OCI-LY7 (cell line): ENCODE measurements at regions of chr5 and their contacts with region 1.

Region 1: DNA sequence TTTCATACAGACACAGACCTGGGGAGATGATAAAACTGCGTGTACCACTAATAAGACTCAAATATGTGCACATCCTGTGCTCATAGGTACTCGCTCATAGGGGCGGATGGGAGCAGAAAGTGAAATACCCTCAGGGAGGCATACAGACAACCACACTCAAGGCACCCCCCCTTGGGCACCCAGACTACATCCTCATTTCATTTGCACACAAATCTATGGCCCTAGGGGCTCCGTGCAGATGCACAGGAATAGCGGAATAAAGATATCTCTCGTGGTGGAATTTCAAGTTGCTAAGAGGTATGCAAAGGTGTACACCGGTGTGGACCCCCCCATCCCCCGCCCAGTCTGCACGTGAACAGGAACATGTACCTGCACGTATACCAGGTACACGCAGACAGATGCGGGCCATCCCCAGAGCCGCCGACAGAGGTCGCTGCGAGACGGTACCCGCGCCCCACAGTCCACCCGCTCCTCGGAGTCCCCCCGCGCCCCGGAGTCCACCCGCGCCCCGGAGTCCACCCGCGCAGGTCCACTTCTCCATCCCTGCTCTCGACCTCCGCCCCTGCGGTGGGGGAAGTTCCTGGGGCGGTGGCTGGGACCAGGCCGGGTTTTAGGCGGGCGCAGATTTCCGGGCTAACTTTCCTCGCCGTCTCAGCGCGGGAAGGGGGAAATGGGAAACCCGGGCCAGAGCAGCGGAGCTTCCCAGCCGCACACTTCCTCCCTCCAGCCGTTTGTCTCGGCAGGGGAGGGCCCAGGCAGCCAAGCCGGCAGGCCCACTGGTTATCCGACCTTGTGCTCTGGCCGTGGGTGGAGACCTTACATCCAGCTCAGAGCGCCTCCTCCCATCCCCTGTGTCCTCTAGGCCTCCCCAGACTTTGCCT is 1.0 kb upstream of the IL12B start:
- DNase-seq: peak; percentile 73
- H3K4me3 ChIP-seq: peak overlapping the region; percentile 72
- H3K27ac ChIP-seq: peak overlapping the region; percentile 57
- H3K4me1 ChIP-seq: peaks cover 36% of the 10 kb centered on the region
- CTCF ChIP-seq: peak; percentile 84

Region 2: DNA sequence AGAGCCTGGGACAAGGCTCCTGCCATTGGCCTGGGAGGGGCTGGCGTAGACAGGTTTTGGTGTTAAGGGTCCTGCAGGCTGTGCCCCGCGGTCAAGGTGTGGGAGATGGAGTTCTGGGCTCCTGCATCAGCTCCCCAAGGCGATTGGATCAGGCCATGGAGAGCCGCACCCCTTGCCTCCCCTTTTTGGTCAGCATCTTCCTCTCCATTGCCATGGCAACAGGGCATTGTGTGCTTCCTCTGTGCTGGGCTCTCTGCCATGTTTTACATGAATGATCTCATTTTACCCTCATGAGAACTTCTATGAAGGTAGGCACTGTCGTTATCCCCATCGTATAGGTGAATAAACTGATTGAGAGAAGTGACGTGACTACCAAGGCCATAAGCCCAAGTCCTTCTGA is 1128.1 kb before region 1 on chr5:
- CTCF ChIA-PET with region 1: no interaction called
- POLR2A ChIA-PET with region 1: no interaction called
- intact Hi-C with region 1: no loop called
- DNase-seq: no peak
- H3K4me3 ChIP-seq: no peak overlapping the region
- H3K27ac ChIP-seq: no peak overlapping the region
- H3K4me1 ChIP-seq: peaks cover 34% of the 10 kb centered on the region
- CTCF ChIP-seq: no peak

Region 3: GRCh38 chr5:159262859-159263567 is 68.3 kb before region 1 on chr5 and contains the start of gene UBLCP1:
- CTCF ChIA-PET with region 1: no interaction called
- POLR2A ChIA-PET with region 1: no interaction called
- intact Hi-C with region 1: no loop called
- DNase-seq: peak; percentile 92
- H3K4me3 ChIP-seq: peak within 1 kb of the TSS; percentile 97
- H3K27ac ChIP-seq: peak within 1 kb of the TSS; percentile 72
- H3K4me1 ChIP-seq: peaks cover 17% of the 10 kb centered on the region
- CTCF ChIP-seq: no peak
- total RNA-seq, gene UBLCP1: 7.7 and 11.3 TPM in 2 replicates

Region 4: DNA sequence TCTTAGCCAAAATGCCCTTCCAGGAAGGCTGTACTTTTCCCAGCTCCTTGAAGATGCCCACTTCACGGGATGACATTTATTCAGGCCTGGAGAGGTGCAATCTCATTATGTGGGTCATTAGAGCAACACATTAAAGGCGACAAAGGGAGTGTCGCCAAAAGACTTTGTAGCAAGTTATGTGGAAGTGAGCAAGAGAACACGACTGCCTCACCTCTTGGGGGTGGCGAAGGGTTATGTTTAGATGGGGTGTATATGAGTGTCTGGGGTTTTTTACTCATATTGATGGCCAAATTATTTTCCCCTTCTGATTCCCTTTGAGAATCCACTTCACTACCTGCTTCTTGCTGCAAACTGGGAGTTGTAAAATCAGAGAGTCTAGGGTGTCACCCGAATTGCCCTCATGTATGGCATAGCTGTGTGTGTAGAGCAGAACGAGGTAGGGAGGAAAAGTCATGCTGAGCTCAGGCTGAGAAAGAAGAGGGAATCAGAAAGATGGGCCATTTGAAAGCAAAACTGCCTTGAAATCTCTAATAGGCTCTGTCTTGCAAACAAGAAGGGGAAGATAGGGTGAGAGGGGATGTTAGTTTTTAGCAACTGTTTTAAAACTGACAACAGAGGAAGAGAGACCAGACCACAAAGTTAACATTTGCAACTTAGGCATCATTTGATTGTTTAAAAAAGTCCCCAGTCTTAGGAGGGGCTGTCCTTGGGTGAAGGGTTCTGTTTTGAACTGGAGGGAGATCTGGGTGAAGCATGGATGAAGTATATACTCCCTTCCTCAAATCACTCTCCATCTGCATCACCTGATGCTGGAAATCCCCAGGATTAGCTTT is 96.1 kb after region 1 on chr5:
- CTCF ChIA-PET with region 1: no interaction called
- POLR2A ChIA-PET with region 1: no interaction called
- intact Hi-C with region 1: loop called (anchors 5 kb)
- DNase-seq: no peak
- H3K4me3 ChIP-seq: no peak overlapping the region
- H3K27ac ChIP-seq: no peak overlapping the region
- H3K4me1 ChIP-seq: no peaks in the 10 kb centered on the region
- CTCF ChIP-seq: no peak